AG04449 (cell line): ENCODE measurements at regions of chr13 and their contacts with region 1.

Region 1: GRCh38 chr13:99269627-99270241 is 11.6 kb upstream of the GPR18 start:
- DNase-seq: no peak
- H3K4me3 ChIP-seq: no peak overlapping the region
- CTCF ChIP-seq: peak; percentile 69

Region 2: DNA sequence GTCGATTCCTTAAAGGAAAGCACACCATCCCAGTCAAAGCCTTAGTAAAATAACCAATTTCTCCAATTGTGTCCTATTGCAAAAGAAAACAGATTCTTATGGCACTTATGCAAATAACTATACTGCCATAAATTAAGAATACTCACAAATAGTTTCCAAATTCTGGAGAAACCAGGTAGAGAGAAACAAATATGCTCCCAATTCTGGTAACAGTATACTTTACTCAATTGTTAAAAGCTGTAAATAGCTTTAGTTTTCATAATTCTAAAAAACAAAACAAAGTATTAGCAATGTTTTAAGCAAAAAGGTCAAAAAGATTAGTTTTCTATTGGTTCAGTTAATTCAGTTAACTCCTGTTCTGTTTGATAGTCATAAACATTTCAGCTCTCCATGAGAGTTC is 87.3 kb before region 1 on chr13:
- CTCF ChIA-PET with region 1: interaction called, 395 read pairs
- POLR2A ChIA-PET with region 1: no interaction called
- DNase-seq: no peak
- H3K4me3 ChIP-seq: no peak overlapping the region
- CTCF ChIP-seq: no peak

Region 3: DNA sequence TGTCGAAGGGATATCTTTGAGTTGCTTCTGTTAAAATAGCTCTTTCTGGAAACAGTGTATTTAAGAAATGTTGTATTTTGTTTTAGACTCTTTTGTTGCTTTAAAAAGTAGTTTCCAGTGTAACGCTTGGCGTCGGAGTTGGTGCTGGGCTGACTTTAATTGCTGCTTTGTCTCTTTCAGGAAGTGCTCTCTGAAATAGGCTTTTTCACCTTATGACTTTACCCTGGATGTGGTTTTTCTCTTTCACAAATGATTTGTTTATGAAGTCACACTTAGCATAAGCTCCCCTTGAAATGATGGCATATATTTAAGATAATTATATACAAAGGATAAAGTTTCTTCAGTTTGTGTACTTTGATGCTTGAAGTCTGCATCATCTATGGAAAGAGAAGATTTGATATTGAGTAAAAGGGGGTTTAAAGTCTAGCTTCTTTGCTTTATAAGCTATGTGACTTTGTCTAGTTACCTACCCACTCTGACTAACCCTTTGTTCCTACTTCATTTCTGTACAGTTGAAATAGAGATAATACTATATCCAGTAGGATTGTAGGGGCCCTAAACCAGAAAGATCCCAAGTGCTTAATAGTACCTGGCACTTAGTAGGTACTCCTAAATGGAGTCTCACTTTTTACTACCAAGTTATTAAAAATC is 11.4 kb before region 1 on chr13 and contains the start of gene GPR18:
- CTCF ChIA-PET with region 1: interaction called, 76 read pairs
- POLR2A ChIA-PET with region 1: no interaction called
- DNase-seq: no peak
- H3K4me3 ChIP-seq: no peak within 1 kb of the TSS
- CTCF ChIP-seq: no peak

Region 4: DNA sequence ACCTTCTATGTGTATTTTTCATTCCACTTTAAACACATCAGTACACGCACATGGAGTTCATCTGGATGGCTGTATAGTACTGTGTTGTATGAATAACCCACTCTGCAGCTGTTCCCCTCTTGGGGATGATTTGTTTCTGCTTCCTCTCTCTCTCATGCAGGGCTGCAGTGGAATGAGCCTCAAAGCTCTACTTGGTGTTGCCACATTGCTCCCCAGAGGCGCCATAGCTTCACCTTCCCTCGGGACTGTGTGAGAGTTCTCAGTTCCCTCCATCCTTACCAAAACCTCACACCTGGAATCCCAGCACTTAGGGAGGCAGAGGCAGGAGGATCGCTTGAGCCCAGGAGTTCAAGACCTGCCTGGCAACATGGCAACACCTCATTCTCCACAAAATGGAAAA is 65.9 kb after region 1 on chr13:
- CTCF ChIA-PET with region 1: interaction called, 13 read pairs
- POLR2A ChIA-PET with region 1: no interaction called
- DNase-seq: no peak
- H3K4me3 ChIP-seq: no peak overlapping the region
- CTCF ChIP-seq: no peak

Region 5: GRCh38 chr13:99404005-99404755 is 134.4 kb after region 1 on chr13:
- CTCF ChIA-PET with region 1: interaction called, 15 read pairs
- POLR2A ChIA-PET with region 1: no interaction called
- DNase-seq: no peak
- H3K4me3 ChIP-seq: no peak overlapping the region
- CTCF ChIP-seq: no peak

Region 6: DNA sequence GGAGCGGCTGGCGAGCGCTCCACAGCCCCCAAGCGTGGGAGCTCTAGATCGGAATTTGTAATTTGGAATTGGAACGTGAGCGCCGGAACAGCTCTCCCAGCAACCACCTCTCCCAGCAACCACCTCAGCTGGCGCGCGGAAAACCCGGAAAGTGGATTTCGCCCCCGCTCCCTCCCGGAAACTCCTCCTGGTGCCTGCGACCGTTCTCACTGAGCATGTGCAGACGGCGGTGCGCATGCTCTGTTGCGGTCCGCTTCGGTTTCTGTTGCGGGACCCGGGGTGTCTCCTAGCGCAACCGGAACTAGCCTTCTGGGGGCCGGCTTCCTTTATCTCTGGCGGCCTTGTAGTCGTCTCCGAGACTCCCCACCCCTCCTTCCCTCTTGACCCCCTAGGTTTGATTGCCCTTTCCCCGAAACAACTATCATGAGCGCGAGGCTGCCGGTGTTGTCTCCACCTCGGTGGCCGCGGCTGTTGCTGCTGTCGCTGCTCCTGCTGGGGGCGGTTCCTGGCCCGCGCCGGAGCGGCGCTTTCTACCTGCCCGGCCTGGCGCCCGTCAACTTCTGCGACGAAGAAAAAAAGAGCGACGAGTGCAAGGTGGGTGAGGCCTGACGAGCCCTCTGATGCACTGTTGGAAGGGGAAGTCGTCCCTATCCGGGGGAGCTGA is 231.6 kb after region 1 on chr13 and contains the start of gene TM9SF2:
- CTCF ChIA-PET with region 1: interaction called, 12 read pairs
- POLR2A ChIA-PET with region 1: no interaction called
- DNase-seq: peak; percentile 77
- H3K4me3 ChIP-seq: peak within 1 kb of the TSS; percentile 92
- CTCF ChIP-seq: no peak